Calu3 (cell line): ENCODE measurements at regions of chr15 and their contacts with region 1.

Region 1: GRCh38 chr15:58077427-58077826 is 11.9 kb upstream of the ALDH1A2 start:
- DNase-seq: peak; percentile 19
- H3K4me3 Mint-ChIP-seq: no peak overlapping the region
- H3K27ac Mint-ChIP-seq: no peak overlapping the region
- H3K4me1 Mint-ChIP-seq: peaks cover 9% of the 10 kb centered on the region
- H3K27me3 Mint-ChIP-seq: peaks cover 4% of the 10 kb centered on the region
- CTCF ChIP-seq: peak; percentile 39

Region 2: GRCh38 chr15:58056015-58056414 is 21.4 kb before region 1 on chr15:
- CTCF ChIA-PET with region 1: no interaction called
- intact Hi-C with region 1: no loop called
- DNase-seq: no peak
- H3K4me3 Mint-ChIP-seq: no peak overlapping the region
- H3K27ac Mint-ChIP-seq: no peak overlapping the region
- H3K4me1 Mint-ChIP-seq: peaks cover 71% of the 10 kb centered on the region
- H3K27me3 Mint-ChIP-seq: no peaks in the 10 kb centered on the region
- CTCF ChIP-seq: peak; percentile 33

Region 3: DNA sequence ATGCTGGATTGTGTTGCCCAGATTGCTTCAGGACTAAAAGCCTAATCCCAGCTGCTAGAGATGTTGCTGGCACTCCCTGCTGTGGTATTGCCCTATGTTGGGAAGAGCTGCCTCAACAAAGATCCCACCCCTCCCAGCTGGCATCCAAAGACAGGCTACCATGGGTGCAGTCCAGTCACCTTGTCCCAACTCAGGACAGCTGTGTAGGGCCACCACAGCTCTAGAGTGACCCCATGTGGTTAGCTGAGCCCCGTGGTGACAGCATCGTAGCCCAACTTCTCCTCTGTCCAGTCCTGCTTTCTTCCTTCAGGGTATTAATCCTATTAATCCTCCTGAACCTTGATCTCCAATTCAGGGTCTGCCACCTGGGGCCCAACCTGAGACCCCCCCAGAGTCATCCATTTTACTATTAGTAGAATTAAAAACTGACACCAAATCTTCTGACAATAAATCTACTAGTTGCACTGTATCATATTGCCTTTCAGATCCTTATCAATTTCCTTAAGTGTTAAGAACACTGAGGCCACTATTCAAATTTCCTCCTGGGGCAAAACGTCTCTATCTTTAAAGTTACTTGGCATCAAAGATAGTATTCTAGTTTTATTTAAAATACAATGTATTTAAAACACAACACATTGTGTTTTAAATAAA is 144.3 kb after region 1 on chr15:
- CTCF ChIA-PET with region 1: interaction called, 17 read pairs
- intact Hi-C with region 1: loop called (anchors 2 kb)
- DNase-seq: peak; percentile 80
- H3K4me3 Mint-ChIP-seq: no peak overlapping the region
- H3K27ac Mint-ChIP-seq: no peak overlapping the region
- H3K4me1 Mint-ChIP-seq: no peaks in the 10 kb centered on the region
- H3K27me3 Mint-ChIP-seq: no peaks in the 10 kb centered on the region
- CTCF ChIP-seq: peak; percentile 77

Region 4: GRCh38 chr15:58298879-58299850 is 221.7 kb after region 1 on chr15:
- CTCF ChIA-PET with region 1: no interaction called
- intact Hi-C with region 1: no loop called
- DNase-seq: no peak
- H3K4me3 Mint-ChIP-seq: no peak overlapping the region
- H3K27ac Mint-ChIP-seq: no peak overlapping the region
- H3K4me1 Mint-ChIP-seq: peaks cover 16% of the 10 kb centered on the region
- H3K27me3 Mint-ChIP-seq: no peaks in the 10 kb centered on the region
- CTCF ChIP-seq: no peak

Region 5: DNA sequence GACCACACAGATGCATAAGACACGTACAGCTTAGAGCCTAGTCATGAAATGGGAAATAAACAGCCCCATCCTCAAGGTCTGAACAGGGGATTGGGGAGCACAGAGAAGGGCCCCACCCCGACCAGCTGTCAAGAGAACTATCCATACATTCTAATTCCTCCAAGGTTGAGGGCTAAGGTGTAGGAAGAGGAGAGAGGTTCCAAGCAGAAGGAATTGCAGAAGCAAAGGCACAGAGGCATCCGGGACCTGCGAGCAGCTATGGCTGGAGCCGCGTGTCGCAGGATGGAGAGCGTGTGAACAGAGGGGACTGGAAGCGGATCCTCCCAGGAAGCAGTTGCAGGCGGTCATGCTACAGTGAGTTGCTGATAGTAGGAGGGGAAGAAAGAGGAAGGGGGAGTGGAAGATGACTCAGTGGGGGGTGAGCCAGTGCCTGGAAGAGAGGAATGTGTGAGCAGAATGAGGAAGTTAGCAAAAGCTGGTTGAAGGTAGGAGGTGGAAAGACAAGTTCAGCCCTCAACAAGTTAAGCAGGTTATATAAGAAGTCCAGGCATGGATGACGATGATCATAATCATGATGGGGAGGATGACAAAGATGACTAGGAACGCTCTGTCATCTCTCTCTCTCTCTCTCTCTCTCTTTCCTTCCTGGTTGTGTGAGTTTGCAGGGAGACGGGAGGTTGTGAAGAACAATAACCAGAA is 444.0 kb after region 1 on chr15:
- CTCF ChIA-PET with region 1: no interaction called
- intact Hi-C with region 1: no loop called
- DNase-seq: peak; percentile 90
- H3K4me3 Mint-ChIP-seq: peak overlapping the region; percentile 57
- H3K27ac Mint-ChIP-seq: peak overlapping the region; percentile 96
- H3K4me1 Mint-ChIP-seq: peaks cover 62% of the 10 kb centered on the region
- H3K27me3 Mint-ChIP-seq: no peaks in the 10 kb centered on the region
- CTCF ChIP-seq: no peak